ENCODE measurements at regions of chr19 and their contacts with region 1.

Region 1: DNA sequence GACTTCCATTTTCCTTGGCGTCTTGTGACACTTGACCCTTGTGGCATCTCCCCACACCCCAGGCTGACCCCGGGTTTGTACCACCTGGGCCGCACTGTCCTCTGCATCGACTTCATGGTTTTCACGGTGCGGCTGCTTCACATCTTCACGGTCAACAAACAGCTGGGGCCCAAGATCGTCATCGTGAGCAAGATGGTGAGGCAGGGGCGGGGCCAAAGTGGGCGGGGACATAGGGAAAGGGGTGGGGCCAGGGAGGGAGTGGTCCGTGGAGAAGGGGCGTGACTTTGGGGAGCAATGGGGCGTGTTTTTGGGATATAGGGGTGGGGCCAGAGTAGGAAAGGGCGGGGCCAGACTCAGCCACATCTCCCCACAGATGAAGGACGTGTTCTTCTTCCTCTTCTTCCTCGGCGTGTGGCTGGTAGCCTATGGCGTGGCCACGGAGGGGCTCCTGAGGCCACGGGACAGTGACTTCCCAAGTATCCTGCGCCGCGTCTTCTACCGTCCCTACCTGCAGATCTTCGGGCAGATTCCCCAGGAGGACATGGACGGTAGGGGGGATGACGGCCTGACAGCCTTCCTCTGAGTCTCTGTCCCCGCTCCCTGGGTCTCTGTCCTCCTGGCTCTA is 42.8 kb downstream of the TRPM4 start:
- DNase-seq: no peak
- ATAC-seq: no peak
- H3K4me3 ChIP-seq: no peak overlapping the region
- H3K4me3 Mint-ChIP-seq: no peak overlapping the region
- H3K27ac ChIP-seq: no peak overlapping the region
- H3K27ac Mint-ChIP-seq: no peak overlapping the region
- H3K4me1 ChIP-seq: no peaks in the 10 kb centered on the region
- H3K4me1 Mint-ChIP-seq: peaks cover 0 to 9% (median 0%) of the 10 kb centered on the region in 7 donors
- H3K27me3 ChIP-seq: no peaks in the 10 kb centered on the region
- H3K27me3 Mint-ChIP-seq: peaks cover 0 to 3% (median 0%) of the 10 kb centered on the region in 5 donors

Region 2: DNA sequence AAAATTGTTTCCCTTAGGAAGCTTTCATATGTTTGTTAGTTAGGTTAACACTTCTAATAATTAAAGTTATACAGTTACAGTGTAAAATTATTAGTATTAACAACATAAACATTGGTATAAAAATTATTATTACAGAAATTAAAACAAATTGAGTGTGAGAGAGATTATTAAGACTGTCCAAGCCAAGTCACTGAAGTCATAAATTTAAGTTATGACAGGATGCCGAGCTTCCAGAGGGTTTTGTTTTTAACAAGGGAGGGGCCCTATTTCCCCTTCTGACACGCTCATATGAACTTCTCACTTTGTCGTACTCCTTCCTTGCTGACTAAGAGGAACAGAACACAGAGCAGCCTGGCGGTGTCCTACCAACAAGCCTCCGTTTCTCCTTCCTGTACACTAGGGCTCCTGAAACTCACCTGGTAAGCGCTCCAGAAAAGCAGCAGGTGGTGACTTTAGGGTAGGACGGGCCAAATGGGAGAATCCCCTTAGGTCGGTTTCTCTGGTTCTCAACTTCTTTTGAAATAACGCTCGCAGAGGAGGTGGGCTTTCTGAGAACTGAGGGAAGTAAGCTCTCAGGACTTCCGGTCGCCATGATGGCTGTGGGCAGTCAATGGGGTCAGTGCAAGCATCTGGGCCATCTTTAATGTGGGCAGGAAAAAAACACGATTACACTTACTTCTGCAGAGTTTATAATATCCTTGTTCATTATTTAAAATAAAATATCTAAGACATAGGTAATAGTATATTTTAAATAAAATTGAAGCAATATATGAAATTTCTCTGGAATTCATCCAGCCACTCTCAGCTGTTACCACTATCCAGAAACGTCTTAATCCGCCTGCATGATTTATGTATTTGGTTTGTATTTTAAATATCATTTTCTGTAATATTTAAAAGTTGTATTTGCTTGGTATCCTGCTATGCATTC is 944.7 kb before region 1 on chr19 and contains the start of gene CARD8:
- CTCF ChIA-PET with region 1: no interaction called
- POLR2A ChIA-PET with region 1: no interaction called
- intact Hi-C with region 1: no loop called
- DNase-seq: peak; percentile 54 to 91 (median 84)
- ATAC-seq: peak; percentile 85
- H3K4me3 ChIP-seq: peak within 1 kb of the TSS; percentile 100
- H3K4me3 Mint-ChIP-seq: peak within 1 kb of the TSS; percentile 74 to 100 (median 99)
- H3K27ac ChIP-seq: peak within 1 kb of the TSS; percentile 88
- H3K27ac Mint-ChIP-seq: peak within 1 kb of the TSS; percentile 90 to 100 (median 97)
- H3K4me1 ChIP-seq: peaks cover 53 to 56% of the 10 kb centered on the region in 2 donors
- H3K4me1 Mint-ChIP-seq: peaks cover 51 to 86% (median 76%) of the 10 kb centered on the region in 7 donors
- H3K27me3 ChIP-seq: no peaks in the 10 kb centered on the region
- H3K27me3 Mint-ChIP-seq: no peaks in the 10 kb centered on the region
- total RNA-seq, gene CARD8: 104 to 301 (median 182) TPM

Region 3: DNA sequence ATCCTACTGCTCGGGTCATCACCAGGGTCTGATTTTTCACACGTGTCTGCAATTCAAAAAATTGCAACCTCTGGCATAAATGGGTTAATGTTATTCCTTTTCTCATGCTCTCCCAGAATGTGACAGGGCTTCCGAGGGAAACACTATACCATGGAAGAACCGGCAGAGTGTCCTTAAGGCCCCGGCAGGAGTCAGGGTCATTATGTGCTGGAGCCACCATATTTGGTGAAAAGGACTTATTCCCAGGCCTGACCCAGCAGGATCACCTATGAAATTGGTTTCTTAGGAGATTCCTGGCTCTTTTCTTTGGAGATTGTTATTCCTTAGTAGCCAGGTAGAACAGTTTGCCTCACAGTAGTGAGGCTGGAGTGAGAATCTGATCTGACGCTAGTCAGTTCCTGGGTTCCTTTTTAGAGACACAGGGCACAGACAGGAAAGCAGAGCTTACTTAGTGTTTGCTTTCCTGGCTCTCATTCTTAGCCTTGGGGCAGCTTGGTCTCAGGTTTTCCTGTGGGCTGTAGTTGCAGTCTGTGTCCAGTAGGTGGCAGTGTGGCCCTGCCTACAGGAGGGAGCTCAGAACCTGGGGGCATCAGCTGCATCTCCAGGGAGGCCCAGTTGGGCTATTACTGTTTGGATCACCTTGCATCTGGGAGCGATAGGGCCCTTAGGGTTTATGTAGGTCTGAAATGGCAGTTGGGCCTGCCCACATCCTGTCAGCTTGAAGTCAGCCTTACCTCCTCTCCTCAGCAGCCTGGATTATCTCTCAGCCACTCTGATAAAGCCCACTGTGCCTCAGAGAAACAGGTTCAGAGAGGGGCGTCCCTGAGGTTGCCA is 102.7 kb before region 1 on chr19:
- CTCF ChIA-PET with region 1: interaction called, 8 read pairs
- POLR2A ChIA-PET with region 1: interaction called, 3 read pairs
- intact Hi-C with region 1: loop called (anchors 1 kb)
- DNase-seq: peak; percentile 58 to 81 (median 73)
- ATAC-seq: peak; percentile 97
- H3K4me3 ChIP-seq: no peak overlapping the region
- H3K4me3 Mint-ChIP-seq: no peak overlapping the region
- H3K27ac ChIP-seq: no peak overlapping the region
- H3K27ac Mint-ChIP-seq: peak overlapping the region in 5 of 9 donors; percentile 8 to 67 (median 49)
- H3K4me1 ChIP-seq: peaks cover 0 to 6% of the 10 kb centered on the region in 2 donors
- H3K4me1 Mint-ChIP-seq: peaks cover 0 to 17% (median 12%) of the 10 kb centered on the region in 7 donors
- H3K27me3 ChIP-seq: no peaks in the 10 kb centered on the region
- H3K27me3 Mint-ChIP-seq: no peaks in the 10 kb centered on the region

Region 4: GRCh38 chr19:49120325-49120683 is 80.0 kb before region 1 on chr19:
- CTCF ChIA-PET with region 1: no interaction called
- POLR2A ChIA-PET with region 1: no interaction called
- intact Hi-C with region 1: no loop called
- DNase-seq: no peak
- ATAC-seq: no peak
- H3K4me3 ChIP-seq: no peak overlapping the region
- H3K4me3 Mint-ChIP-seq: peak overlapping the region; percentile 70 to 91 (median 80)
- H3K27ac ChIP-seq: no peak overlapping the region
- H3K27ac Mint-ChIP-seq: peak overlapping the region in 3 of 9 donors; percentile 5 to 76 (median 47)
- H3K4me1 ChIP-seq: peaks cover 8 to 9% of the 10 kb centered on the region in 2 donors
- H3K4me1 Mint-ChIP-seq: peaks cover 18 to 38% (median 33%) of the 10 kb centered on the region in 7 donors
- H3K27me3 ChIP-seq: no peaks in the 10 kb centered on the region
- H3K27me3 Mint-ChIP-seq: peaks cover 0 to 31% (median 0%) of the 10 kb centered on the region in 5 donors